ENCODE measurements at regions of chr22 and their contacts with region 1.

Region 1: DNA sequence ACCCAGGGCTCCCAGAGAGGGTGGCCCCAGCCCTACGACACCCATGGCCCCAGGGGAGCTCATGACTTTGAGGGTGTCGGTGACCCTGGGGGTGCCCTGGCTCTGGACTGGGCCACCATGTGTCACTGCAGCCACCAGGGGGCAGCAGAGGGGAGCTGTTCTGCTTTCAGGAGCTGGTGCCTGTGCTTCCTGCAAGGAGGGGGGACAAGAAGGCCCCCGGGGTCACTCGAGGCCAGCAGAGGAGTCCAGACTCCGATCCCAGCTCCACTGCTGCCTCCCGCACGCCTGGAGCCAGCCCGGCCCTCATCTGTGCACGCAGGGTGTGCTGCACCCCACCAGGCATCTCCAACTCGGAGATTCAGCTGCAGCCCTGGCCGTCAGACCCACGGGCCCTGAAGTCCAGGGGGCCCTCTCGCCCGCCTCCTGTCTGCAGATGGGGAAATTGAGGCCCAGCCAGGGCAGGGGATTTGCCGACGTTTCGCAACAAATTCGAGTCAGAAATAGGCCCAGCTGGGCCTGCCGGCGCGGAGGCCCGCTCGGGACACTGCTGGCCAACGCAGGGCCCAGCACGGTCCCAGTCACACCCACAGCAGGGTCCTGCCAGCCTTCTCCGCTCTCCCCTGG is 29.5 kb upstream of the WNT7B start:
- DNase-seq: peak; percentile 95
- H3K4me3 ChIP-seq: peak overlapping the region; percentile 58
- H3K27ac ChIP-seq: peak overlapping the region; percentile 97
- H3K4me1 ChIP-seq: peaks cover 49% of the 10 kb centered on the region
- H3K27me3 ChIP-seq: no peaks in the 10 kb centered on the region

Region 2: DNA sequence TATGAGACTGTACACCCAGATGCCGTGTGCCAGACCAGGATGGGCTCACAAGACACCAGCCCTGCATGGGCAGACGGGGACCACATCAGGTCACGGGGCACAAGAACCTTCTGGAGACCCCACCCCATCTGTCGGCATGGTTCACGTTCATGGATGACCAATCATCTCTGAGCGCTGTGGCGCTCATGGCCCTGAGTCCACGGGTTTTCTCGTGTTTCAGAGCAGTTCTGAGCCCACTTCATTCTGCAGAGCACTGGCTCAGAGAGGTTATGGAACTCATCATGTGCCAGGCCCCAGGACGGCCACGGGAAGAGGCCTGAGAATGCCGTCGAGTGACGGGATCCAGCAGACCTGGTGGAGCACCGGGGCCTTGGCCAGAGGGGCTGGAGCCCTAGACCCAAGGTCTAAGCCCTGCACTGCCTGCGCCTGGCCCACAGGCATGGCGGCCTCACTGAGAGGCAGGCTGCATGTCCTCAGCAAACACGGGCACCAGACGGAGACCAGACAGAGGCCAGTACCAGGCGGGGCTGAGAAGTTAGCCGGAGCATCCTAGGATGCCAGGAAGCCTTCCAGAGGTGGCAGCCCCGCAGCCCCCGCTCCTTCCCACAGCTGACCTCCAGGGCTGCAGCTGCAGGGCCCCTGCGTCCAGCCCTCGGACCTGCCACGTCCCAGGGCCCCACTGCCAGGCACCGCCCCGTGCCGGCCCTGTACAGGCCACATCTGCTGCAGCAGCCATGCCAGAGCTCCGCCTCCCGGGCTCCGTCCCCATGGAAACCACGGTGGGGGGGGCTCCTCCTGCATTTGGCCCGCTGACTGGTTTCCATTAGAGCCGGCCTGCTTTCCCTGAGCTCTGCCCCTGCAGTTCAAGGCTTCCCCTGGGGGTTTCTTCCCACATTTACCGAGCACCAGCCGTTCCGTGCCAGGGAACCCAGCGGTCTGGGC is 81.1 kb after region 1 on chr22:
- in situ Hi-C with region 1: loop called (anchors 10 kb)
- DNase-seq: peak; percentile 96
- H3K4me3 ChIP-seq: peak overlapping the region; percentile 97
- H3K27ac ChIP-seq: peak overlapping the region; percentile 99
- H3K4me1 ChIP-seq: peaks cover 69% of the 10 kb centered on the region
- H3K27me3 ChIP-seq: no peaks in the 10 kb centered on the region

Region 3: DNA sequence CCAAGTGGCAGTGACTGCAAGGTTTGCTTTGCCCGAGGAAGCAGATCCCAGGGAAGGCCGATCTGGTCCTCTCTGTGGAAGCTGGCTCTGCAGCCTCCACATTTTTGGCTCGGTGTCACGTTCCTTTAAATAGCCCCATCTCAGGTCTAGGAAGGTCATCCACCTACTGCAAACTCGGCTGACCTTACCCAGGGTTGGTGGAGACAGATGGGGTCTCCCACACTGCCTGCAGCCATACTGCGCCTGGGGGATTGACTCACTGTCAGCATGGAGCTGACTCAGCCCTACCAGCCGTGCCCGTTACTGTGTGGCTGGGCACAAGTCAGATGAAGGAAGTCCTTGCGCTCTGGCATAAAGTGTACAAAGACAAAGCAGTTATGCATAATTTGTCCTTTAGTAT is 226.7 kb after region 1 on chr22:
- in situ Hi-C with region 1: no loop called
- DNase-seq: peak; percentile 16
- H3K4me3 ChIP-seq: no peak overlapping the region
- H3K27ac ChIP-seq: no peak overlapping the region
- H3K4me1 ChIP-seq: peaks cover 10% of the 10 kb centered on the region
- H3K27me3 ChIP-seq: no peaks in the 10 kb centered on the region